Upper lobe of right lung (tissue), 1 donor: ENCODE measurements at regions of chr1 and their contacts with region 1.

Region 1: DNA sequence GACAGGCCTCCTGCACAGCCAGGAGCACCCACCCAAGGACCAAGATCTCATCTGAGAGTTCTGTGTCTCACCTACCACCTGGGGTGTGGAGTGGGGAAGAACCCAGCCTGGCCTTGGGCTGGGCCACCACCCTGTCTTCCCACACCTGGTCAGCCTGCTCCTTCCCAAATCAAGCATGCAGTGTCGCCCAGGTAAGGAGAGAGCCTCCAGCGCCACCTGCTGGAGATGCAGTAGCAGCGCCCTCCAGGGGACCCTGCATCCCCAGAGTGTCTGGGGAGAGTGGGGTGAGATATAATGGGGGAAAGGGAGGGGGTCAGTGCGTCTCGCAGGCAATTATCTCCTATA is 32.3 kb downstream of the KIAA2013 start:
- DNase-seq: peak; percentile 87
- ATAC-seq: peak; percentile 96
- H3K4me3 ChIP-seq: no peak overlapping the region
- H3K27ac ChIP-seq: no peak overlapping the region
- H3K4me1 ChIP-seq: no peaks in the 10 kb centered on the region
- H3K27me3 ChIP-seq: peaks cover 41% of the 10 kb centered on the region
- CTCF ChIP-seq: peak; percentile 85

Region 2: GRCh38 chr1:11838349-11839272 is 55.3 kb before region 1 on chr1:
- intact Hi-C with region 1: loop called (anchors 5 kb)
- DNase-seq: peak; percentile 83
- ATAC-seq: peak; percentile 88
- H3K4me3 ChIP-seq: no peak overlapping the region
- H3K27ac ChIP-seq: no peak overlapping the region
- H3K4me1 ChIP-seq: no peaks in the 10 kb centered on the region
- H3K27me3 ChIP-seq: no peaks in the 10 kb centered on the region
- CTCF ChIP-seq: peak; percentile 97